Heart right ventricle (tissue), 16 donors: ENCODE measurements at regions of chrX and their contacts with region 1.

Region 1: DNA sequence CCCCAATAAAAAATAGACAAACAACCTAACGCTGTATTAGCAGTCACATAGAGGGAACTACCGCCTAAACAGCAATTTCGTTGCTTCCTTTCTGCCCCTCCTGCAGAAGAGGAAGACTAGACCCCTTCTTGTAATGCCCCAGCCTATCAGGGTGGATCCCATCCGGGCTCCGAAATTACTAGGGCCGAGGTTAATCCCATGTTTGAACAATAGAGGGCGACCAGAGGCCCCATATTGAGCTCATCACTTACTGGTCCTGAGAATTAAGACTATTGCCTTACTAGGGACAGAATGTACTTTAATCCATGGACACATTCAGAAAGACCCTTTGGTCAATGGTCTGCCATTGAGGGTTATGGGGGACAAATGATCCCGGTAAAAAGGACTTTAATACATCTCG is 11.8 kb upstream of the ZNF630 start:
- DNase-seq: peak in 1 of 2 donors; percentile 25
- ATAC-seq: peak in 6 of 8 donors; percentile 55 to 75 (median 71)
- H3K4me3 ChIP-seq: no peak overlapping the region
- H3K27ac ChIP-seq: no peak overlapping the region
- H3K4me1 ChIP-seq: no peaks in the 10 kb centered on the region
- H3K27me3 ChIP-seq: peaks cover 0 to 5% (median 0%) of the 10 kb centered on the region in 7 donors
- CTCF ChIP-seq: peak; percentile 36 to 68 (median 59)

Region 2: GRCh38 chrX:47976254-47977151 is 106.7 kb before region 1 on chrX:
- intact Hi-C with region 1: no loop called
- DNase-seq: no peak
- ATAC-seq: no peak
- H3K4me3 ChIP-seq: no peak overlapping the region
- H3K27ac ChIP-seq: no peak overlapping the region
- H3K4me1 ChIP-seq: no peaks in the 10 kb centered on the region
- H3K27me3 ChIP-seq: no peaks in the 10 kb centered on the region
- CTCF ChIP-seq: no peak

Region 3: GRCh38 chrX:48493890-48494364 is 410.7 kb after region 1 on chrX:
- intact Hi-C with region 1: loop called in 5 of 10 experiments (anchors 5 to 10 kb)
- DNase-seq: no peak
- ATAC-seq: peak in 6 of 8 donors; percentile 30 to 65 (median 49)
- H3K4me3 ChIP-seq: no peak overlapping the region
- H3K27ac ChIP-seq: no peak overlapping the region
- H3K4me1 ChIP-seq: peaks cover 0 to 3% (median 0%) of the 10 kb centered on the region in 9 donors
- H3K27me3 ChIP-seq: peaks cover 0 to 5% (median 0%) of the 10 kb centered on the region in 7 donors
- CTCF ChIP-seq: peak in 6 of 9 donors; percentile 31 to 53 (median 40)